GM10248 (cell line): ENCODE measurements at regions of chr2 and their contacts with region 1.

Region 1: GRCh38 chr2:196453613-196454047 is 185.9 kb upstream of the CCDC150 start:
- DNase-seq: peak; percentile 38
- CTCF ChIP-seq: peak; percentile 75

Region 2: GRCh38 chr2:196068271-196069209 is 385.1 kb before region 1 on chr2 and contains the start of gene DNAH7:
- CTCF ChIA-PET with region 1: interaction called, 10 read pairs
- POLR2A ChIA-PET with region 1: no interaction called
- DNase-seq: peak; percentile 91
- CTCF ChIP-seq: peak; percentile 99

Region 3: DNA sequence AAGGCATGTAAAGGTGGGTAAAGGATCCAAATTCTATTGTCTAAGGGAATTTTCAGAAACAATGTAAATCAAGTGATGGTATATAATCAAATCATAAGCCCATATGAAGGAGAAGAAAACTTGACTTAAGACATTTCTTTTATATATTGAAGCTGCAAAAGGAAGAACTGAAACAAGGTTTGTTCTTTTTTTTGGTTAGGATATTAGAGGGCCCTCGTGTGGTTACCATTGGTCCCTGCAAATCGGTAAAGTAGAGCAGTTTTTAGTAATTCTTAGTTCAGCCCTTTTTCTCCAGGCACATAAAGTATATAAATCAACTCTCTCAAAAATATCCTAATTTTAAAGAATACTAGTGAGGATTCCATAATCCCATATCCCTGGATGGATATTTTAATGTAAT is 176.6 kb before region 1 on chr2:
- CTCF ChIA-PET with region 1: interaction called, 10 read pairs
- POLR2A ChIA-PET with region 1: no interaction called
- DNase-seq: peak; percentile 64
- CTCF ChIP-seq: peak; percentile 75

Region 4: GRCh38 chr2:196322973-196323810 is 130.4 kb before region 1 on chr2:
- CTCF ChIA-PET with region 1: interaction called, 14 read pairs
- POLR2A ChIA-PET with region 1: no interaction called
- DNase-seq: no peak
- CTCF ChIP-seq: no peak

Region 5: DNA sequence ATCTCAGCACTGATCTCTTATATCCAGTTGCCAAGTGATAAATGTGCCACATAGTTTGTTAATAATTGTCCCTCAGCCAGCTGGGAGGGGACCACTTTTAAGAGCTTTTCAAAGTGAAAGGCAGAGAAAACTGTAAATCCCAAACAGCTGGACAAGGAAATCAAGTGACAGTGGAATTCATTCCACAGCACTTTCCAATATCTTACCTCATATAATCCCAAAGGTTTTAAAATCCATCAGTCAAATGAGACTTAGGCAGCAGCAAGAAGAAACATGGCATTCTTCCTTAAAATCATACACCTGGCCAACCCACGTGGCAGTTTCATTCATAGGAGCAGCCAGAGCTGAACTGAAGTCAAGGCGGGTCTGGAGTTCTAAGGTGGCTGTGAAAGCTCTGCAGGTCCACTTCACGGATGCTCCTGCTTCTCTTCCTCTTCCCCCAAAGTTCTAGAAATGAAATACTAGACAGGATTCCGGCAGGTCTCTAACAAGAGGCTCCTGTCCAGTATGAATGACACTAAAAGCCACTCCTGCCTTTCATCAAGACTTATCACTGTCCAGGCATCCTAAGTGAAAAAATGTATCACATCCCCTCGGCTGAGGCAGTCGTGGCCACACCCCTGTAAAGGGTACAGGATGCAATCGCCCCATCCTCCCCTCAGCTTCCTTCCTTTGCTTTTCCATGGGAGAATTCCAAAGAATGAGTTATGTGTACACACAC is 91.9 kb before region 1 on chr2:
- CTCF ChIA-PET with region 1: interaction called, 29 read pairs
- POLR2A ChIA-PET with region 1: no interaction called
- DNase-seq: no peak
- CTCF ChIP-seq: no peak

Region 6: DNA sequence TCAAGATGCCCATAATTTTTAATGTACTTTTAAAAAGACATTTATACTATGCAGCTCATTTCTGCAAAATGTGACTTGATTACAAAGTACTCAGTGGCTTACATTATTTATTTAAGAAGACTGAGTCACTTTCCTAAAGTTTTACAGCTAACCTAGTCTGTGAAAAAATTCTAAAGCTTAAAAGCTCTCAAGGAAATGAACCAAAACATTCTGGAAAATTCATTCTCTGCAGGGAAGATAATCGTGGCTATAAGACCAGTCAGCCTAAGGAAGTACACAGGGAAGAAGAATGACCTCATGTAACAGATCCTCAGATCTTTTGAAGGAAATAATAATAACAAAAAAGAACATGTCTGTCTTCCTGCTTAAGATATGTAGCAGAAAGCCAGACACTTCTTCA is 50.2 kb before region 1 on chr2:
- CTCF ChIA-PET with region 1: interaction called, 33 read pairs
- POLR2A ChIA-PET with region 1: no interaction called
- DNase-seq: no peak
- CTCF ChIP-seq: no peak

Region 7: DNA sequence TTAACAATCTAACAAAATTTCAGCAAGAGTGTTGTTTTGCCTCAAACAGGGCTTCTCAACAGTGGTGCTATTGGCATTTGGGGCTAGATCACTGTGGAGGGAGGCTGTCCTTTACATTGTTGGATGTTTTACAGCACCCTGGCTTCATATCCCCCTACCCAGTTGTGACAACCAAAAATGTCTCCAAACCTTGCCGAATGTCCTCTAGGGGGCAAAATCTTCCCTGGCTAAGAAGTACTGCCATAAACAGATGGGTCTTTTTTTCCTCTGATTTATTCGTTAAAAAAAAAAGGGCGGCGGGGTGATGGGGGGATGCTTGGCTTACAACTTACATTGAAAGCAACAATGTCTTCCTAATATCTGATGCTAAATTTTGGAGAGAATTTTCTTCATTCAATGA is 21.7 kb before region 1 on chr2:
- CTCF ChIA-PET with region 1: interaction called, 51 read pairs
- POLR2A ChIA-PET with region 1: no interaction called
- DNase-seq: no peak
- CTCF ChIP-seq: no peak